ENCODE measurements at regions of chr3 and their contacts with region 1.

Region 1: GRCh38 chr3:41198950-41199865 is at the start of gene CTNNB1:
- DNase-seq: peak; percentile 96
- H3K4me3 ChIP-seq: peak within 1 kb of the TSS; percentile 70 to 97 (median 90)
- H3K27ac ChIP-seq: peak within 1 kb of the TSS; percentile 96 to 99 (median 98)
- H3K4me1 ChIP-seq: peaks cover 2 to 43% (median 26%) of the 10 kb centered on the region in 4 donors
- H3K27me3 ChIP-seq: no peaks in the 10 kb centered on the region
- CTCF ChIP-seq: peak in 1 of 4 experiments; percentile 9
- EP300 ChIP-seq: no peak
- POLR2A ChIP-seq: peak; percentile 98
- total RNA-seq, gene CTNNB1: 362 to 495 (median 404) TPM

Region 2: GRCh38 chr3:40490916-40491315 is 708.3 kb before region 1 on chr3:
- intact Hi-C with region 1: no loop called
- DNase-seq: no peak
- H3K4me3 ChIP-seq: no peak overlapping the region
- H3K27ac ChIP-seq: no peak overlapping the region
- H3K4me1 ChIP-seq: no peaks in the 10 kb centered on the region
- H3K27me3 ChIP-seq: no peaks in the 10 kb centered on the region
- CTCF ChIP-seq: no peak
- EP300 ChIP-seq: no peak
- POLR2A ChIP-seq: no peak

Region 3: DNA sequence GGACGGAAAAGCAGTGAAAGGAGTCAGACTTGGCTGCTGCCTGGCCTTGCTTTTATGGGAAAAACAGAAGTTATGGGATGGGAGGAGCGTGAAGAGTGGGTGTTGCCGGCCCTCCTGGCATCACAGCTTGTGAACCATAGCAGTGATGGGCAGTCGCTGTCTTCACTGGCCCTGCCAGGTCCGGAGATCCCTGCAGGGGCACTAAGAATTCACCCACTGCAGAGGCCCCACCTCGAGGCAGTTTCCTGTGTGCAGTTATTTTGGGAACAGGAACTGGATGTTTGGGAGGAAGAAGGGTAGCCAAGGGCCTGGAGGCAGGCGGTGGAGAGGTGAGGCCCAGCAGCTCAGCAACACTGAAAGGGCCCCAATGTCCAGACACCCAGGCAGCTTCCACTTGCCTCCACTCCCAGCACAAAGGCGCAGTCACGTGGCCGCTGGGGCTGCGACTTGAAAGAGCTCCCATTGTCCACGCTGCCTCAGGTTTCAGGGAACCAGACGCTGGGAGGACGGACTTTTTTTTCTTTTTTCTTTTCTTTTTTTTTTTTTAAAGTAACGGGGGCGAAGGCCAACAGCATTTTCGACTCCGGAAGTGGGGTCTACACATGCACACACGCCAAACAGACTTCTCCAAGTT is 418.8 kb before region 1 on chr3:
- intact Hi-C with region 1: loop called (anchors 10 kb)
- DNase-seq: peak; percentile 92
- H3K4me3 ChIP-seq: peak overlapping the region in 3 of 4 donors; percentile 6 to 31 (median 12)
- H3K27ac ChIP-seq: peak overlapping the region; percentile 64 to 71 (median 69)
- H3K4me1 ChIP-seq: peaks cover 0 to 20% (median 16%) of the 10 kb centered on the region in 4 donors
- H3K27me3 ChIP-seq: no peaks in the 10 kb centered on the region
- CTCF ChIP-seq: no peak
- EP300 ChIP-seq: no peak
- POLR2A ChIP-seq: no peak